Adrenal gland (tissue), 19 donors: ENCODE measurements at regions of chr12 and their contacts with region 1.

Region 1: DNA sequence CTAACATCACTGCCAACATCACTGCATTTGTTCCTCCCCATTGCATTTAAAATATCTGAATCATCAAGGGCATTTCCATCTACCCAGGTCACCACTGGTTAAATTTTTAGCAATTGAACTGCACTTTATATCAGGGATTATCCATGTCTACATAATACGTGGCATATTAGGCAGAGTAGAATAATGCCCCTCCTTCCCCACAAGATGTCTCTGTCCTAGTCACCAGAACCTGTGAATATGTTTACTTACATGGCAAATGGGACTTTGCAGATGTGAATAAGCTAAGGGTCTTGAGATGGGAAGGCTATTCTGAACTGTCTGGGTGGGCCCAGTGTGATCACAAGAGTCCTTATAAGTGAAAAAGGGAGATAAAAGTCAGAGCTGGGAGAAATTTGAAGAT is 181.7 kb upstream of the ARID2 start:
- DNase-seq: no peak
- H3K4me3 ChIP-seq: no peak overlapping the region
- H3K27ac ChIP-seq: no peak overlapping the region
- H3K4me1 ChIP-seq: no peaks in the 10 kb centered on the region
- H3K27me3 ChIP-seq: no peaks in the 10 kb centered on the region
- CTCF ChIP-seq: no peak
- POLR2A ChIP-seq: no peak

Region 2: GRCh38 chr12:45720069-45720468 is 172.2 kb after region 1 on chr12:
- intact Hi-C with region 1: loop called in 1 of 2 experiments (anchors 5 kb)
- DNase-seq: no peak
- H3K4me3 ChIP-seq: no peak overlapping the region
- H3K27ac ChIP-seq: no peak overlapping the region
- H3K4me1 ChIP-seq: peaks cover 0 to 35% of the 10 kb centered on the region in 2 donors
- H3K27me3 ChIP-seq: no peaks in the 10 kb centered on the region
- CTCF ChIP-seq: no peak
- POLR2A ChIP-seq: no peak